Endothelial cell of umbilical vein (primary cell): ENCODE measurements at regions of chr11 and their contacts with region 1.

Region 1: GRCh38 chr11:75388386-75389275 is 10.7 kb upstream of the RPS3 start:
- DNase-seq: peak; percentile 92
- H3K4me3 ChIP-seq: no peak overlapping the region
- H3K27ac ChIP-seq: no peak overlapping the region
- H3K4me1 ChIP-seq: peaks cover 17% of the 10 kb centered on the region
- H3K27me3 ChIP-seq: no peaks in the 10 kb centered on the region
- CTCF ChIP-seq: peak; percentile 63 to 72
- POLR2A ChIP-seq: no peak

Region 2: DNA sequence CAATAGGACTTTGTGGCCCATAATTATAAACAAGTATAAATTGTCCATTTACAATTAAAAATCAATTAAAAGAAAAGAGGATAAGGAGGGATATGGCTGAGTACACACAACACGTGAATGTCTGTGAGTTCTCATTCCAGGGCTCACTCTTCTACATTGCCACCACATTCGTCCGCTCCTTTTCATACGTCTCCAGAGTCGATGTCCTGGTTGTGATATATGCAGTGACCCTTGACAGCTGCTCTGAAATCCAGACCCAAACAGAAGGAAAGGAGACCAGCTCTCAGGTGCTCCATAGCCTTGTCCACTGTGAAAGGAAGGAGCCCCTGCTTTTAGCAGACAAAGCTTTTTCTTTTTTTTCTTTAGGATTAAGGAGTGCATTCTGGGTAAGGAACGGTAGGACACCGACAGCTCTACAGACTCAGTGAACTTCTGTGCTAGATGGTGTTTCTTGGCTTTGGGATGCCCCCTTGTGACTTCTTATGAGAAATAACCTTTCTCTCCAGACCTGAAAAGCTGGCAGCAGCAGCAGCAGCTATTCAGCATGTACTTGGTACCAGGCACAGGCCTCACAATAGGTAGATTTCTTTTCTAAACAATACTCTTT is 1457.5 kb before region 1 on chr11:
- CTCF ChIA-PET with region 1: no interaction called
- POLR2A ChIA-PET with region 1: no interaction called
- dilution Hi-C with region 1: no loop called
- intact Hi-C with region 1: no loop called
- DNase-seq: peak; percentile 76
- H3K4me3 ChIP-seq: no peak overlapping the region
- H3K27ac ChIP-seq: no peak overlapping the region
- H3K4me1 ChIP-seq: no peaks in the 10 kb centered on the region
- H3K27me3 ChIP-seq: no peaks in the 10 kb centered on the region
- CTCF ChIP-seq: peak; percentile 37 to 55
- POLR2A ChIP-seq: no peak

Region 3: DNA sequence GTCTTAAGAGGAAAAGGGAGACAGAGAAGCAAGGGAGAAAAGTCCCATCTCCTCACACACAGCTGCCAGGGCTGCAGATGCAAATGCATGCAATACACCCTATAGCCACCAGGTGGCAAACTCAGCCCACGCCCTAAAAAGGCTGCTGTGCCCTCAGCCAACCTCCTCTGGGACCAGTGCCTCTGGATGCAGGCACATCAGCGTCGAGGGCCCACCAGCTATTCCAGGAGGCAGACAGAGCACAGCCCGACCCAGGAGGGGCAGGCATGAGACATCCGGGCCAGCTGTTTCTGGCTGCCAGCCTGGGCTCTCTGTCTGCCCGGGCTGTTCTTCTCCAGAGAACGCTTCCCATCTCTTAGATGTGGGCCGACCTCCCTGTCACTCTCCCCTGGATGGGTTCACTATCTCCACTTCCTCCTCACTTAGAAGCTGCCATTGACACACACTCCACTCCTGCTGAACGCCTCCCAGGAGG is 108.4 kb before region 1 on chr11:
- CTCF ChIA-PET with region 1: interaction called, 166 read pairs
- POLR2A ChIA-PET with region 1: no interaction called
- dilution Hi-C with region 1: no loop called
- intact Hi-C with region 1: loop called (anchors 1 kb)
- DNase-seq: peak; percentile 87
- H3K4me3 ChIP-seq: no peak overlapping the region
- H3K27ac ChIP-seq: peak overlapping the region; percentile 1
- H3K4me1 ChIP-seq: peaks cover 29% of the 10 kb centered on the region
- H3K27me3 ChIP-seq: no peaks in the 10 kb centered on the region
- CTCF ChIP-seq: peak; percentile 95 to 97
- POLR2A ChIP-seq: no peak

Region 4: DNA sequence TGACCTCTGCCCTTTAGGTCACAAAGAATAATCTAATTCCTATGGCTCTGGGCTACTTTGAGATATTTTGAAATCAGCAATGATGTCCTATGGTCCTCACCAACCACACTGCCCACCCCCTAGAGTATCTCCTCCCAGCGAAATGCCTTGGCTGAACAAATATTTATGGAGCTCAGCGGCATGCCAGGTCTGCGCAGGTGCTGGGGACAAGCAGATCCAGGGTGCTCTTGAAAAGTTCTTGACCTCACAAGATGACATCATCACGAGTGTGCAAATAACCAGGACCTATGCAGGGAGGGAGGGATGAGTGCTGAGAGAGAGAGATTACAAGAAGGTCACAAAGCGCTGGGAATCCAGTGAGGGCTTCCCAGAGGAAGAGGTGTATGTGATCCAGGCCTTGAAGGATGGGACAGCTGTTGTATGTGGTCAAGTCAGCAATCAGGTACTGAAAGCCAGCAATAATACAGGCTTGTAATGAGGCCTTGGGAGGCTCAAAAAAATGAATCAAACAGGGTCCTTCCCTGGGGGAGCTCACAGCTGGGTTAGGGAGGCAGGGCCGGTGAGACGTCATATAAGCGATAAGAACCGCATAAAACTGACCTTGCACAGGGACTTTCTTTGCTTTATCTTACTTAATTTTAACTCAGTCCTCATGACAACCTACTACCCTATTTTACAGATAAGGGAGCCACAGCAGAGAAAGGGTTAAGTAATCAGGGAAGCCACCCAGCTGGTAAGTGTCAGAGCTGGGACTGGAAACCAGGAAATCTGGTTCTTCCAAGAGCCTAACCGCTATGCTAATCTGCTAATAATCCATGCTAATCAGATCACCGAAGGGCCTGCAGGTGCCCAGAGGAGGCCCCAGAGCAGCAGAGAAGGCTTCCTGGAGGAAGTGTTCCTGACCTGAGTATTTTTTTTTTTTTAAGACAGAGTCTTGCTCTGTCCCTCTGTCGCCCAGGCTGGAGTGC is 45.4 kb before region 1 on chr11:
- CTCF ChIA-PET with region 1: interaction called, 22 read pairs
- POLR2A ChIA-PET with region 1: no interaction called
- dilution Hi-C with region 1: no loop called
- intact Hi-C with region 1: no loop called
- DNase-seq: peak; percentile 30
- H3K4me3 ChIP-seq: no peak overlapping the region
- H3K27ac ChIP-seq: no peak overlapping the region
- H3K4me1 ChIP-seq: peaks cover 69% of the 10 kb centered on the region
- H3K27me3 ChIP-seq: no peaks in the 10 kb centered on the region
- CTCF ChIP-seq: no peak
- POLR2A ChIP-seq: no peak

Region 5: DNA sequence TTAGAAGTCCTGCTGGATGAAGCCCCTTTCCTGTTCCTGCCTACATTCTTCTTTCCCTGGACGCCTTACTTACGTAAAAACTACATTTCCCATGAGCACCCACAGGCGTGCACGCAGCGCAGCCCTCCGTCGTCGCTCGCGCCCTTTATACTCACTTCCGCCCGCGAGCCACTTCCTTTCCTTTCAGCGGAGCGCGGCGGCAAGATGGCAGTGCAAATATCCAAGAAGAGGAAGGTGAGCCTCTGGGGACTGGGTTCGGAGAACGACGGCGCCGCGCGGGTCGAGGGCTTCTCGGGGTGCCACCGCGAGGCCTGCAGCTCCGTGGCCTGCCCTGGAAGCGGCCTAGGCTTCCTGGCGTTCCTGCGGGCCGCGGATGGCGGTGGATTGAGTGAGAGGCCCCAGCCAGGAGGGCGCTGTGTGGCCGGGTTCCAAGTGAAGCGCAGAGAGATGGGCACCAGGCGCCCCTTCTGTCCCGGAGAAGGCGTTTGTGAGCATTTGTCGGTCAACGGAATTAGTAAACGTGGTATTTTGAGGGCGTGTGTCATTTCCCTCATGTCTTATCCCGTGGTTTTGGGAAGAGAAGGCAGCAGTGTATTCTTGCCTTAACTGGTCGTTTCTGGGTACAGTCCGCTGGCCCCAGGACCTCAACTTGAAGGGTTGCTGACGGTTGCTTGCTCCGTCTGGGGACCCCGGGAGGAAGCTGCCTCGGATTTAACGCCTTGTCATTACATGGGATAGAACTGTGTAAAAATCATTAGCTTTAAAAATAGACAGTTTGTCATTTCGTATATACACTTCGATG is 10.9 kb after region 1 on chr11 and contains the start of gene RPS3:
- CTCF ChIA-PET with region 1: interaction called, 26 read pairs
- POLR2A ChIA-PET with region 1: no interaction called
- dilution Hi-C with region 1: no loop called
- intact Hi-C with region 1: no loop called
- DNase-seq: peak; percentile 95
- H3K4me3 ChIP-seq: peak within 1 kb of the TSS; percentile 77 to 86 (median 80)
- H3K27ac ChIP-seq: peak within 1 kb of the TSS; percentile 80
- H3K4me1 ChIP-seq: peaks cover 37% of the 10 kb centered on the region
- H3K27me3 ChIP-seq: no peaks in the 10 kb centered on the region
- CTCF ChIP-seq: peak in 1 of 2 donors; percentile 16
- POLR2A ChIP-seq: peak; percentile 98
- total RNA-seq, gene RPS3: 2,836 and 2,973 TPM in 2 replicates

Region 6: GRCh38 chr11:75428281-75428724 is 39.7 kb after region 1 on chr11:
- CTCF ChIA-PET with region 1: interaction called, 7 read pairs
- POLR2A ChIA-PET with region 1: no interaction called
- dilution Hi-C with region 1: no loop called
- intact Hi-C with region 1: loop called (anchors 5 kb)
- DNase-seq: peak; percentile 96
- H3K4me3 ChIP-seq: peak overlapping the region in 1 of 3 experiments; percentile 34
- H3K27ac ChIP-seq: no peak overlapping the region
- H3K4me1 ChIP-seq: peaks cover 9% of the 10 kb centered on the region
- H3K27me3 ChIP-seq: peaks cover 26 to 29% of the 10 kb centered on the region in 2 experiments
- CTCF ChIP-seq: no peak
- POLR2A ChIP-seq: peak; percentile 82

Region 7: GRCh38 chr11:75532200-75533048 is 143.8 kb after region 1 on chr11:
- CTCF ChIA-PET with region 1: interaction called, 56 read pairs
- POLR2A ChIA-PET with region 1: no interaction called
- dilution Hi-C with region 1: no loop called
- intact Hi-C with region 1: loop called (anchors 1 kb)
- DNase-seq: peak; percentile 76
- H3K4me3 ChIP-seq: no peak overlapping the region
- H3K27ac ChIP-seq: no peak overlapping the region
- H3K4me1 ChIP-seq: peaks cover 13% of the 10 kb centered on the region
- H3K27me3 ChIP-seq: no peaks in the 10 kb centered on the region
- CTCF ChIP-seq: peak; percentile 72 to 78
- POLR2A ChIP-seq: no peak

Region 8: DNA sequence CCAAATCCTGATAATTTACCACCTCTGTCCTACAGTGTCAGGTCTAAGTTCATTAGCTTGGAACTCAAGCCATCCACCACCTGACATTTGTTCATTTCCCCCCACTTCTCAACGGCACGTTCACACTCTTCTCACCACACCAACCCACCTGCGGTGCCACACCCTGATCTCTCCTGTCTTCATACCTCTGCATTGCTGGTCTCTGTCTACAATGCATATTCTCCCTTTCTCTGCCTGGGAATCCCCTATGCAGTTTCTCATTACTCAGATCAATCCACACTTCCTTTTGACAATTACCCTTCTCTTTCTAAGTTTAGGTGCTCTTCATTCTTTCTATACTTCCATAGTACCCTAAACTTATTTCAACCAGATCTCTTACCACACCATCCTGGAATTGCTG is 1035.7 kb after region 1 on chr11:
- CTCF ChIA-PET with region 1: no interaction called
- POLR2A ChIA-PET with region 1: no interaction called
- dilution Hi-C with region 1: no loop called
- intact Hi-C with region 1: no loop called
- DNase-seq: no peak
- H3K4me3 ChIP-seq: no peak overlapping the region
- H3K27ac ChIP-seq: no peak overlapping the region
- H3K4me1 ChIP-seq: no peaks in the 10 kb centered on the region
- H3K27me3 ChIP-seq: peaks cover 18 to 28% of the 10 kb centered on the region in 2 experiments
- CTCF ChIP-seq: no peak
- POLR2A ChIP-seq: no peak